Activated B cell treated with CpG ODN at 0.5 μM for 24 hours (primary cell): ENCODE measurements at regions of chr11 and their contacts with region 1.

Region 1: DNA sequence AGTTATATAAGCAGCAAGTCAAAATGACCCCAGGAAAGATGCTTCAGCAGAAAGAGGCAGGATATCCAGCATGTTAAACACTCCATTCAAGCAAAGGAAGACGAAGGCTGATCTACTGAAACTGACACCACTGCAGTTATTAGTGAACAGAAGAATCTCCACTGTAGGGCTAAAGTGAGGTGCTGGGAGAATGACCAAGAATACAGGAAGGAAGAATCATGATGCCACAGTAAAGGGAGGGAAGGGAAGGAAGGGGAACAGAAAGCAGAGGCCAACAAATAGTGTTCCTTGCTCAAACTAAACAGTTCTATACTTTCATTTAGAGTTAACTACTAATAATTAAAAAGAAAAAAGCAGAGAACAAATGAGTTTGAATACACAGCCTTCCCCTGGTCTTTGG is 92.5 kb downstream of the SIK3 start:
- DNase-seq: no peak
- ATAC-seq: peak; percentile 21
- H3K4me3 Mint-ChIP-seq: no peak overlapping the region
- H3K27ac Mint-ChIP-seq: peak overlapping the region; percentile 69
- H3K4me1 Mint-ChIP-seq: peaks cover 68% of the 10 kb centered on the region
- H3K27me3 Mint-ChIP-seq: no peaks in the 10 kb centered on the region
- CTCF ChIP-seq: no peak

Region 2: GRCh38 chr11:116861539-116861938 is 144.2 kb before region 1 on chr11:
- CTCF ChIA-PET with region 1: no interaction called
- POLR2A ChIA-PET with region 1: no interaction called
- intact Hi-C with region 1: no loop called
- DNase-seq: no peak
- ATAC-seq: no peak
- H3K4me3 Mint-ChIP-seq: no peak overlapping the region
- H3K27ac Mint-ChIP-seq: no peak overlapping the region
- H3K4me1 Mint-ChIP-seq: no peaks in the 10 kb centered on the region
- H3K27me3 Mint-ChIP-seq: no peaks in the 10 kb centered on the region
- CTCF ChIP-seq: no peak

Region 3: DNA sequence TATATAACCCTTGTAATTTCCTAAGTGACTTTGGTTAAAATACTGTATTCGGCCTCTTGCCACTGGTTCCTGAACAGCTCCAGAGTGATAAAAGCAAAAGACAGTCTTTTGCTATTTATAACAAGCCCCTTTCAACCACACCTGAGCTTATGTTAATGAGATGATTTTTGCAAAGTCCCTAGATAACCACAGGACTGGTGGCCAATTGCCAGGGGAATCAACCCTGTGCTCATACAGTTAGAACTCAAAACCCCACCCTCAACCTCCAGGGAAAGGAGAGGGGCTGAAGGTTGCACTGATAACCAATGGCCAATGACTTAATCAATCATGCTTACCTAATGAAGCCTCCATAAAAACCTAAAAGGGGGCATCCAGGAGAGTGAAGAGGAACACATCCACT is 14.5 kb after region 1 on chr11:
- CTCF ChIA-PET with region 1: interaction called, 3 read pairs
- POLR2A ChIA-PET with region 1: interaction called, 5 read pairs
- intact Hi-C with region 1: loop called (anchors 2 kb)
- DNase-seq: no peak
- ATAC-seq: peak; percentile 86
- H3K4me3 Mint-ChIP-seq: peak overlapping the region; percentile 45
- H3K27ac Mint-ChIP-seq: peak overlapping the region; percentile 62
- H3K4me1 Mint-ChIP-seq: peaks cover 79% of the 10 kb centered on the region
- H3K27me3 Mint-ChIP-seq: no peaks in the 10 kb centered on the region
- CTCF ChIP-seq: no peak